Gastrocnemius medialis (tissue), 4 donors: ENCODE measurements at regions of chr17 and their contacts with region 1.

Region 1: GRCh38 chr17:80981062-80981902 is 10.4 kb upstream of the CHMP6 start:
- DNase-seq: no peak
- ATAC-seq: peak in 1 of 2 donors; percentile 32
- H3K4me3 ChIP-seq: peak overlapping the region in 1 of 4 donors; percentile 21
- H3K27ac ChIP-seq: no peak overlapping the region
- H3K4me1 ChIP-seq: peaks cover 0 to 6% of the 10 kb centered on the region in 2 donors
- H3K27me3 ChIP-seq: peaks cover 0 to 6% (median 4%) of the 10 kb centered on the region in 3 donors
- CTCF ChIP-seq: peak; percentile 66 to 97 (median 85)
- POLR2A ChIP-seq: no peak

Region 2: GRCh38 chr17:80575057-80575875 is 406.0 kb before region 1 on chr17:
- in situ Hi-C with region 1: no loop called
- intact Hi-C with region 1: loop called (anchors 10 kb)
- DNase-seq: peak; percentile 35 to 68
- ATAC-seq: peak; percentile 75 to 96
- H3K4me3 ChIP-seq: no peak overlapping the region
- H3K27ac ChIP-seq: no peak overlapping the region
- H3K4me1 ChIP-seq: peaks cover 0 to 10% of the 10 kb centered on the region in 2 donors
- H3K27me3 ChIP-seq: no peaks in the 10 kb centered on the region
- CTCF ChIP-seq: peak; percentile 79 to 97 (median 92)
- POLR2A ChIP-seq: no peak

Region 3: GRCh38 chr17:80817321-80818251 is 163.7 kb before region 1 on chr17:
- in situ Hi-C with region 1: no loop called
- intact Hi-C with region 1: no loop called
- DNase-seq: peak in 1 of 2 donors; percentile 12
- ATAC-seq: no peak
- H3K4me3 ChIP-seq: no peak overlapping the region
- H3K27ac ChIP-seq: no peak overlapping the region
- H3K4me1 ChIP-seq: peaks cover 5 to 13% of the 10 kb centered on the region in 2 donors
- H3K27me3 ChIP-seq: no peaks in the 10 kb centered on the region
- CTCF ChIP-seq: no peak
- POLR2A ChIP-seq: no peak

Region 4: DNA sequence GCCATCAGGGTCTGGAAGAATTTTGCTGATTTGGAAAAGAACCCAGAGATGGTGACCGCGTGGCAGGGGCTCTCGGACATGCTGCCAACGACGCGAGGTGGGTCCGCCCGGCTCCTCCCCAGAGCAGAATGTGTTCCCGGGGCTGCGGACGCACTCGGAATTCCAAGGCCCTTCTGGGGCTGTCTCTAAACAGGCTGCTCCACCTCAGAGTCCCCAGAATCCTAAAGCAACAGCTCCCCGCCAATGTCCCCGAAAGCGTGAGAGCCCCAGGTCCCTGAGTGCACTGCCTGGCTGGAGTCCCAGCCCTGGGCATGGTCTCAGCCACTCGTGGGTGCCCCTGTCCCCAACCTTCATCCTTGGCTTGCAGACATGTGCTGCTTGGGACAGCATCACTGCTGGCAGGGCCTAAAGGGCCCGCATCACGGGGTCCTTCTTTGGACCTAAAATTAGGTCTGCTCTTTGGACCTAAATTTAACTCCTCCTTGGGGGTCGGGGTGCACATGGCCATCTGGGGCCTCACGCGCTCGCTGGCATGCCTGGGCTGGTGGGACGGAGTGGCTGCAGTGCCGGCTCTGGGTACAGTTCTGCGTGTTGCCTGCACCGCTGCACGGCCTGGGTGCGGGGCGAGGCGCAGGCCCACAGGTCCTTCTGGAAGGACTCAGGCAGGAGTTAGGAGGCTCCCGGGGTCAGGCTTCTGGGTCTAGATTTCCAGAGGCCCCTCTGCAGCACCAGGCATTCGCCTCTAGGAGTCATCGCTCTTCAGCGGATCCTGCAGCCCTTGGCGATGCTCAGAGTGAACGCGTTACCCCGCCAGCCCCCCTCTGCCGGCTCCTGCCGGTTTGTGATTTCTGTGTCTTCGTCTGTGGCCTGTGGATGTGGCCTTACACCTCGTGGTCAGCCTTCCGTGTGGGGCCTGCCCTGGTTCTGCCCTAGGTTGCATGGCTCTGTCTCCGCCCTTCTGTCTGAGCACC is 31.5 kb before region 1 on chr17:
- in situ Hi-C with region 1: no loop called
- intact Hi-C with region 1: no loop called
- DNase-seq: peak in 1 of 2 donors; percentile 14
- ATAC-seq: no peak
- H3K4me3 ChIP-seq: no peak overlapping the region
- H3K27ac ChIP-seq: no peak overlapping the region
- H3K4me1 ChIP-seq: no peaks in the 10 kb centered on the region
- H3K27me3 ChIP-seq: no peaks in the 10 kb centered on the region
- CTCF ChIP-seq: no peak
- POLR2A ChIP-seq: no peak